Activated naive CD4-positive, alpha-beta T cell treated with anti-CD3 and anti-CD28 coated beads, Interleukin-2, amount 10 ng/mL, durations not matched to agents 7 days and 5 days (primary cell): ENCODE measurements at regions of chr20 and their contacts with region 1.

Region 1: DNA sequence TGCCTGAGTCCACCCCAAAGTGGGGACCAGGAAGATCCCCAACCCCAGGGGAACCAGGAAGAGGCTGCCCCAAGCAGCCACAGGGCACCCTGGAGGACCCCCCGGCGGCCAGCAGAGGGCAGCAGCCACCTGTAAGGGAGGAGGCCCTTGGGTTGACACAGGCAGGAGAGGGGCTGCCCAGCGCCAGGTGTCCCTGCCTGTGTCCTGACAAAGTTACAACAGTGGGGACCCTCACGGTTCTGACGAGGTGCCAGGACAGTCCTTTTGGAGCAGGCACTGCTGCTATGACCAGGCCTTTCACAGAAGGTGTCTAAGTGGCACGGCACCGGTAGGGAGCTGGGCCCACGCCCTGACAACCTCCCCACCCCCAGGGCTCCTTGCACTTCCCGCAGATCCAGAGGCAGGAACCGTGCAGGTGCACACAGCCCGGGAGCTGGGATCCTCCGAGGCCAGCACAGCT is 176.7 kb downstream of the BMP7 start:
- DNase-seq: peak; percentile 78
- H3K4me3 Mint-ChIP-seq: no peak overlapping the region
- H3K27ac Mint-ChIP-seq: no peak overlapping the region
- H3K4me1 Mint-ChIP-seq: peaks cover 2% of the 10 kb centered on the region
- H3K27me3 Mint-ChIP-seq: peaks cover 8% of the 10 kb centered on the region

Region 2: GRCh38 chr20:57108732-57109573 is 19.2 kb after region 1 on chr20:
- CTCF ChIA-PET with region 1: no interaction called
- DNase-seq: no peak
- H3K4me3 Mint-ChIP-seq: no peak overlapping the region
- H3K27ac Mint-ChIP-seq: no peak overlapping the region
- H3K4me1 Mint-ChIP-seq: no peaks in the 10 kb centered on the region
- H3K27me3 Mint-ChIP-seq: peaks cover 12% of the 10 kb centered on the region

Region 3: DNA sequence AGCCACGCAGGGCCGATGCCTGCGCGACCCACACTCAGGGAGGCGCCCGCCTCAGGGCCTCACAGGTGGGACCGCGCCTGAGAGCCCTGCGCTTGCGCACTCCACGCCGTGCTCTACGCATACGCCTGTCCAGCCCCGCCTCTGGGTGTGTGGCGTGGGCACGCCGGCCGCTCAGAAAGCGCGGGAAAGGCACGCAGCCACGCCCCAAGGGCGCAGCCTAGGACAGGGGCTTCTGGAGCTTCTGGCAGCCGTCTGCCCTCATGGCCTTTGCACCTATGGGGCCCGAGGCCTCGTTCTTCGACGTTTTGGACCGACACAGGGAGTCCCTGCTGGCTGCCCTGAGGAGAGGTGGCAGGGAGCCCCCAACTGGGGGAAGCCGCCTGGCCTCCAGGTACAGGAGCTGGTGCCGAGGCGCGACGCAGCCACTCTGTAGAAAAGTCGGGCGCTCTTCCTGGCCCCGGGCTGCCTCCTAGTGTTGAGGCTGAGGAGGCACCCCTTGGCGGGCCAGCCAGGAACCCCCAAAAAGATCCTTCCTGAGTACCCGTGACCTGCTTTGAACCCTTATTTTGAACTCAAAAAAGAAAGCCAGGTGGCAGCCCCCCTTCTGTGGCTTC is 240.0 kb after region 1 on chr20 and contains the start of gene SPO11:
- CTCF ChIA-PET with region 1: interaction called, 28 read pairs
- DNase-seq: no peak
- H3K4me3 Mint-ChIP-seq: no peak within 1 kb of the TSS
- H3K27ac Mint-ChIP-seq: no peak within 1 kb of the TSS
- H3K4me1 Mint-ChIP-seq: no peaks in the 10 kb centered on the region
- H3K27me3 Mint-ChIP-seq: peaks cover 59% of the 10 kb centered on the region

Region 4: GRCh38 chr20:57346477-57346876 is 256.8 kb after region 1 on chr20:
- CTCF ChIA-PET with region 1: interaction called, 69 read pairs
- DNase-seq: peak; percentile 84
- H3K4me3 Mint-ChIP-seq: no peak overlapping the region
- H3K27ac Mint-ChIP-seq: no peak overlapping the region
- H3K4me1 Mint-ChIP-seq: no peaks in the 10 kb centered on the region
- H3K27me3 Mint-ChIP-seq: peaks cover 8% of the 10 kb centered on the region